ENCODE measurements at regions of chr10 and their contacts with region 1.

Region 1: DNA sequence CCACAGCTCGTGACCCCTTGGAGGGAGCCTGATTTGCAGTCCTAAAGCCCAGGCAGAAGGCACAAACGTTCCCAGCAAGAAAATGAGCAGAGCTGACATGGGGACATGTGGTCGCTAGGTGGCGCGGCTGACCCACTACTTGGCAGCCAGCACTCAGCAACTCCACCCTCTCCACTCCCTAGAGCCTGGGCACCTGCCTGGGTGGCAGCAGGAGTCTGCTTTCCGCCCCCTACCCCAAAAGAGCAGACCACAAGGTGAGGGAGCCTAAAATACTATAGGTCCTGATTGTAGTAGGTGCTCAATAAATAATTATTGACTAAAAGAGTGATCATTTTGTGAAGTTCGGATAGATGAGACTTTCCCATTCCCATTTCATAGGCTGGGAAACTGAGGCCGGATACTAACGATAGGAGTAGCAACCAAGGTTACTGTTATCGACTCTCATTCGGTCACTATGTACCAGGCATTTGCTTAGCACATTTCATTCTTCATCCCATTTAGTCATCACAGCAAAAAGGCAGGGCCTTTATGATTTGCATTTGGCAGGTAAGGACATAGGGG is 57.4 kb downstream of the NEUROG3 start:
- DNase-seq: peak; percentile 85
- ATAC-seq: peak; percentile 94
- H3K4me3 Mint-ChIP-seq: no peak overlapping the region
- H3K27ac Mint-ChIP-seq: no peak overlapping the region
- H3K4me1 Mint-ChIP-seq: no peaks in the 10 kb centered on the region
- H3K27me3 Mint-ChIP-seq: peaks cover 34% of the 10 kb centered on the region

Region 2: DNA sequence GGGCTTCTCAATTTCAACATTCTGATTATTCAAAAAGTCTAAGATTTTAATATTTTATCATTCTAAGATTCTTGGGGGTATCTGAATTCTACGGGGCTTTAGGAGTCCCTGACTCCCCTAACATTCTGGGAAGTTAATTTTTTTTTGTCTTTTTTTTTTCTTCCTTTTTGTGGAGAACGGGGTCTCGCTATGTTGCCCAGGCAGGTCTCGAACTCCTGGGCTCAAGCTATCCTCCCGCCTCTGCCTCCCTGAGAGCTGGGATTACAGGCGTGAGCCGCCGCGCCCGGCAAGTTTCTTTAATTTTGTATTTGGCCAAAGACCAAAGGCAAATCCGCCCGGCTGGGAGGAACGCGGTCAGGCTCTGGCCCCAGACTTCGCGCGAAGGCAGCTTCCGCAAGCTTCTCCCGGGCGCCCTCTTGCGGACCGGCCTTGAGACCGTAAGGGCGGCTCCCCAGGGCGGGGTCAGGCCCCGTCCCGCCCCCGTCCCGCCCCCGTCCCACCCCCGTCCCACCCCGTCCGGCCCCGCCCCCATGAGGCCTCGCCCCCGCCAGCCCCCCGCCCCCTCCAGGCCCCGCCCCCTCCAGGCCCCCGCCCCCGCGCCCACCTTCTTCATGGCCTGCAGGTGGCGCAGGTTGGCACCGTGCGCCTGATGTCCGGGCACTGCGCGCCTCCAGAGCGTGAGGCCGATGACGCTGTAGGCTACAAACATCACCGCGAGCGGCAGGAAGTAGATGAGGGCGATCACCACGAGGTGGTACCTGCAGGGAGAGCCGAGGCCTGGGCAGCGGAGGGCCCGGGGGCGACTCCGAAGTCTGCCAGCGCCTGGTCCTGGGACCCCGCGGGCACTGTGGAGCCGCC is 107.2 kb before region 1 on chr10:
- CTCF ChIA-PET with region 1: interaction called, 22 read pairs
- POLR2A ChIA-PET with region 1: no interaction called
- DNase-seq: peak; percentile 93
- ATAC-seq: peak; percentile 92
- H3K4me3 Mint-ChIP-seq: peak overlapping the region; percentile 71
- H3K27ac Mint-ChIP-seq: peak overlapping the region; percentile 90
- H3K4me1 Mint-ChIP-seq: peaks cover 34% of the 10 kb centered on the region
- H3K27me3 Mint-ChIP-seq: no peaks in the 10 kb centered on the region

Region 3: DNA sequence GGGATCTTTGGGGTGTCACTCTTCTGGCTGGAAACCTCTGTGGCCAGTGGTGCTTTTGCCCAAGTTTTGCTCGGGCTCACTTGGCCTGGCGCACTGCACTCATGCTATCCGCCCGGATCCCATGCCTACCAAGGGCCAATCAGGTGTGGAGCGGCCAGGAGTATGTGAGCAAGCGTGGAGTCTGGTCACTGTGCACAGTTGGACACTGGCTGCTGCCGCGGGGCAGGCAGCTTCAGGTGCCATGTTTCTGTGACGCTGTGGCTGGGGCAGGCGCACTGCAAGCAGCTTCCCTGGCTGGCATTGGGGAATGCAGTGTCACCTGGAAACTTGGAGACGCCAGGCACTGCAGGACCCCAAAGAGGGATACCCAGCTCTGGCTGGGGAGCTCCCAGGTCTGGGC is 12.2 kb after region 1 on chr10:
- CTCF ChIA-PET with region 1: interaction called, 14 read pairs
- POLR2A ChIA-PET with region 1: no interaction called
- DNase-seq: no peak
- ATAC-seq: no peak
- H3K4me3 Mint-ChIP-seq: no peak overlapping the region
- H3K27ac Mint-ChIP-seq: no peak overlapping the region
- H3K4me1 Mint-ChIP-seq: no peaks in the 10 kb centered on the region
- H3K27me3 Mint-ChIP-seq: peaks cover 21% of the 10 kb centered on the region

Region 4: GRCh38 chr10:69639291-69640195 is 123.8 kb after region 1 on chr10:
- CTCF ChIA-PET with region 1: interaction called, 314 read pairs
- POLR2A ChIA-PET with region 1: interaction called, 5 read pairs
- DNase-seq: peak; percentile 81
- ATAC-seq: peak; percentile 66
- H3K4me3 Mint-ChIP-seq: no peak overlapping the region
- H3K27ac Mint-ChIP-seq: no peak overlapping the region
- H3K4me1 Mint-ChIP-seq: no peaks in the 10 kb centered on the region
- H3K27me3 Mint-ChIP-seq: peaks cover 4% of the 10 kb centered on the region

Region 5: DNA sequence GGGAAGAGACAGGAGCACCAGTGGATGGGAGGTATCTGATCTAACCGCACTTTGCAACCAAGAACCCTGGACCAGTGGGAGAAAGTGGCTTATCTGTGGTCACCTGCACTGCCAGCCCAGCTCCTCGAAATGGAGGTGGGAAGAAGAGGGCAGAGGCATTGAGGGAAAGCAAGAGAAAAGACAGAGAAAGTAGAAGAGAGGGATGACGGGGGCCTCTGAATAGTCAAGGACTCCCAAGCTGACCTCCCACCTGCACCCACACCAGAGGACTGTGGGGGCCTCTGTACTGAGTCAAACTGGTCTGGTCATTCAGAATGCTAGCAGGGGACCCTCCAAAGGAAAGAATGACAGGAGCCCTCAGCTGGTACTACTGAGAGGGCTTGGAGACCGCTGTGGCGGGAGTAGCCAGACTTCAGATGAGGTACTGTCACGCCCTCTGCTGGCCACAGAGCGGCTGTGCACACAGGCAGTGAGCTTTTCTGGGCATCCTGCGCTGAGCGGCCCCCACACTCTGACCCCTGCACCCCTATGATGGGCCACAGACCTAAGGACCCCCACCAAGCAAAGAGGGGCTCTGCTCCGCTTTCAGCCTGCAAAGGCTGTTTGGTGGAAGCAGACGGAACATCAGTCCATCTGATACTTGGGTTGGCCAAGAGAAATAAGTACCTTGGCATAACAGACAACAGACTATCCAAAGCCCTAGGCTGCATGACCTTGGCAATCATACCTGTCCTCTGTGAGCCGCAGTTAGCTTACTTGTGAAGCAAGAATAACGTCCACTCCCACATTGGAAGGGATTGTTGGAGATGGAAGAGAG is 398.8 kb after region 1 on chr10:
- CTCF ChIA-PET with region 1: interaction called, 12 read pairs
- POLR2A ChIA-PET with region 1: no interaction called
- DNase-seq: peak; percentile 78
- ATAC-seq: peak; percentile 75
- H3K4me3 Mint-ChIP-seq: no peak overlapping the region
- H3K27ac Mint-ChIP-seq: no peak overlapping the region
- H3K4me1 Mint-ChIP-seq: no peaks in the 10 kb centered on the region
- H3K27me3 Mint-ChIP-seq: peaks cover 5% of the 10 kb centered on the region